T-cell (primary cell): ENCODE measurements at regions of chr2 and their contacts with region 1.

Region 1: GRCh38 chr2:100381240-100381639 is 36.2 kb downstream of the CHST10 start:
- DNase-seq: peak in 33 of 35 experiments; percentile 20 to 72 (median 58)
- ATAC-seq: peak in 2 of 4 experiments; percentile 34 to 41
- H3K4me3 ChIP-seq: no peak overlapping the region
- H3K4me3 Mint-ChIP-seq: no peak overlapping the region
- H3K27ac ChIP-seq: no peak overlapping the region
- H3K27ac Mint-ChIP-seq: no peak overlapping the region
- H3K4me1 ChIP-seq: no peaks in the 10 kb centered on the region
- H3K4me1 Mint-ChIP-seq: peaks cover 0 to 2% (median 0%) of the 10 kb centered on the region in 3 donors
- H3K27me3 ChIP-seq: no peaks in the 10 kb centered on the region
- H3K27me3 Mint-ChIP-seq: no peaks in the 10 kb centered on the region

Region 2: DNA sequence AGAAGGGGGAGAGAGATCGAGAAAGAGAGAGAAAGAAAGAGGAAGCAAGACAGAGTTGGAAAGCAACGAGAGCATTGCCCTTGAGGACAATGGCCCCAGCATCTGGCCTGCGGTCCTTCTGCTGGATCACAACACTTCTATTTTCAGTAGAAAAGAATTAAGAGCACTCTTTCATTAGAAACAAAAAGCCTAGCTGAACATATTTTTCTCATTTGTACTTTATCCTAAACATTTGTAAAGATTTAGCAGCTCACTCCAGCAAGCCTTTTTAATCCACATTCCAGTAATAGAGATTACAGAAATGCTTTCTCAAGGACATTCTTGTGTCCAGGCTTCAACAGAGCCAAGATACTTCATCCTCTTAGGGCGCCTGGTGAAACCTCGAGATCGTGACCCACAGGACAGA is 207.2 kb before region 1 on chr2:
- CTCF ChIA-PET with region 1: no interaction called
- POLR2A ChIA-PET with region 1: no interaction called
- DNase-seq: no peak
- ATAC-seq: no peak
- H3K4me3 ChIP-seq: no peak overlapping the region
- H3K4me3 Mint-ChIP-seq: no peak overlapping the region
- H3K27ac ChIP-seq: no peak overlapping the region
- H3K27ac Mint-ChIP-seq: no peak overlapping the region
- H3K4me1 ChIP-seq: no peaks in the 10 kb centered on the region
- H3K4me1 Mint-ChIP-seq: no peaks in the 10 kb centered on the region
- H3K27me3 ChIP-seq: no peaks in the 10 kb centered on the region
- H3K27me3 Mint-ChIP-seq: no peaks in the 10 kb centered on the region

Region 3: DNA sequence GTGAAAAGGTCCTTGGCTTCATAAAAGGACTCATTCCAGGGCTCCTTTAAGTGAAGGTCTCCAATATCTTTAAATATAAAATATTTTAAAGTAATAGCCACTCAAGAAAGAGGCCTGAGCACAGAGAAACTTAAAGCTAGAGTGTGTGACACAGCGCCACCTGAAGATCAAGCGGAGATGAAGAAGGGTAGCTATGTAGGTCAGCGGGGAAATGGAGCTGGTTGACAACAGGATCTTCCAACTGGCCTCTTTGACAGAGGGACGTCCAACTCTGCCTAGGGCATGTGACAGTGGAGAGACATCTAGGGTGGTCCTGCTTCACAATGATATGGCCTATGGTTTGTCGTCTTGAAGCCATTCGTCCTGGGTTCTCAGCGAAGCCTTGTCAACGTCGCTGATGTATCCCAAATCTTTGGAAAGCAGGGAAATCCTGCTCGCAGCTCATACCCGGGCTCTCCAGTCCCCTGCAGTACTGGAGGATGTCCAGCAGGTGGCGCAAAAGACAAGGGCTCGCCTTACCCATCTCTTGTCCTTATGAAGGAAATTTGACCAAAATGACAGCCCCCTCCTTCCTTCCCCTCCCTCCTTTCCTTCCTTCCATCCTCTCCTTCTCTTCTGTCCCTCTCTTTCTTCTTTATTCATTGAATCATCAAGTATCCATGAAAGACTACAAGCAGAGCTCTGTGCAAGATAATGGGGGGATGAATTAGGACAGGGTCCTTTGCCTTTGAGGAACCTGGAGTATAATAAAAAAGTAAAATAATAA is 118.5 kb before region 1 on chr2:
- CTCF ChIA-PET with region 1: interaction called, 7 to 31 read pairs
- POLR2A ChIA-PET with region 1: no interaction called
- DNase-seq: peak in 30 of 35 experiments; percentile 13 to 61 (median 40)
- ATAC-seq: peak; percentile 36 to 65 (median 56)
- H3K4me3 ChIP-seq: no peak overlapping the region
- H3K4me3 Mint-ChIP-seq: no peak overlapping the region
- H3K27ac ChIP-seq: no peak overlapping the region
- H3K27ac Mint-ChIP-seq: no peak overlapping the region
- H3K4me1 ChIP-seq: no peaks in the 10 kb centered on the region
- H3K4me1 Mint-ChIP-seq: no peaks in the 10 kb centered on the region
- H3K27me3 ChIP-seq: no peaks in the 10 kb centered on the region
- H3K27me3 Mint-ChIP-seq: no peaks in the 10 kb centered on the region

Region 4: GRCh38 chr2:100470898-100471514 is 89.8 kb after region 1 on chr2:
- CTCF ChIA-PET with region 1: interaction called in 1 of 2 experiments, 10 read pairs
- POLR2A ChIA-PET with region 1: no interaction called
- DNase-seq: no peak
- ATAC-seq: no peak
- H3K4me3 ChIP-seq: no peak overlapping the region
- H3K4me3 Mint-ChIP-seq: no peak overlapping the region
- H3K27ac ChIP-seq: no peak overlapping the region
- H3K27ac Mint-ChIP-seq: no peak overlapping the region
- H3K4me1 ChIP-seq: no peaks in the 10 kb centered on the region
- H3K4me1 Mint-ChIP-seq: peaks cover 0 to 5% (median 0%) of the 10 kb centered on the region in 3 donors
- H3K27me3 ChIP-seq: peaks cover 0 to 5% of the 10 kb centered on the region in 2 experiments
- H3K27me3 Mint-ChIP-seq: peaks cover 46 to 50% of the 10 kb centered on the region in 2 donors